ENCODE measurements at regions of chr9 and their contacts with region 1.

Region 1: DNA sequence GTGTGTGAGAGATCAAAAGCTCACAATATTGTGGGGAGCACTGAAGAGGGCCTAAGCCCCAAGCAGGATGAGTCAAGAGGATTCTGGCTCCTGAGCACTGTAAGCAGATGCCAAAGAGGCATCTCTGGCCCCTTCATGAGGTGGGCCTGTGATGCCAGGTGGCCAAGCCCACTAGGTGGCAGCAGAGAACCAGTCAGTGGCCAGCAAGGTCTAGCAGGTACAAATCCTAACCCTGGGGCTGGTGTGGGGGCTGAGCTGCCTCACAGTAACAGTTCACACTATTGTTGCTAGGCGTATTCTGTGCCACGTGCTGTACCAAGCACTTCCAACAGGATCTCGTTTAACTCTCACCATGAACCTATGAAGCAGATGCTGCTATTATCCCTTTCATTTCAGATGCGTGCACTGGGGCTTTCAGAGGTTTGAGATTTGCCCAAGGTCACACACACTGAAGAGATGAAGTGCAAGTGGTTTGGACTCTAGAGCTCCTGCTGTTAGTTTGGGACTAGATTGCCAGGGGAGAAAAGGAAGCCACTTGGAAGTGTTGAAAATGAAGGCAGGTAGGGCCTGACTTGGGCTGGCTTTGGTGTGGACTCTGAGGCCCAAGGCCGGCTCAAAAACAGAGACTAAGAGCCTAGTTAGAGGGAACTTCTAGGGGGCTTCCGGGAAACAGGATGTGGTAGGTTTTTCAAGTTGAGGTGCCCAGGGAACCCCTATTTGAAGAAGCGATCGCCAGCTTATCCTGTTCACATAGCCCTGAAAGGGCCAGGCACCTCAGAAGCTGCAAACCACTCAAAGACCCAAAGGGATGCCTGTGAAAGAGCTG is 4.4 kb upstream of the MLANA start:
- DNase-seq: peak; percentile 57 to 87 (median 81)
- ATAC-seq: peak; percentile 96
- H3K4me3 ChIP-seq: no peak overlapping the region
- H3K4me3 Mint-ChIP-seq: no peak overlapping the region
- H3K27ac ChIP-seq: no peak overlapping the region
- H3K27ac Mint-ChIP-seq: no peak overlapping the region
- H3K4me1 ChIP-seq: peaks cover 10% of the 10 kb centered on the region
- H3K4me1 Mint-ChIP-seq: peaks cover 8% of the 10 kb centered on the region
- H3K27me3 ChIP-seq: no peaks in the 10 kb centered on the region
- H3K27me3 Mint-ChIP-seq: no peaks in the 10 kb centered on the region
- CTCF ChIP-seq: peak; percentile 86

Region 2: GRCh38 chr9:4987961-4988421 is 898.3 kb before region 1 on chr9:
- CTCF ChIA-PET with region 1: no interaction called
- POLR2A ChIA-PET with region 1: no interaction called
- intact Hi-C with region 1: no loop called
- DNase-seq: peak in 8 of 9 experiments; percentile 21 to 79 (median 56)
- ATAC-seq: no peak
- H3K4me3 ChIP-seq: no peak overlapping the region
- H3K4me3 Mint-ChIP-seq: no peak overlapping the region
- H3K27ac ChIP-seq: peak overlapping the region in 1 of 2 experiments; percentile 26
- H3K27ac Mint-ChIP-seq: no peak overlapping the region
- H3K4me1 ChIP-seq: peaks cover 26% of the 10 kb centered on the region
- H3K4me1 Mint-ChIP-seq: peaks cover 34% of the 10 kb centered on the region
- H3K27me3 ChIP-seq: no peaks in the 10 kb centered on the region
- H3K27me3 Mint-ChIP-seq: no peaks in the 10 kb centered on the region
- CTCF ChIP-seq: peak; percentile 74

Region 3: GRCh38 chr9:5764130-5764868 is 122.0 kb before region 1 on chr9:
- CTCF ChIA-PET with region 1: no interaction called
- POLR2A ChIA-PET with region 1: no interaction called
- intact Hi-C with region 1: no loop called
- DNase-seq: no peak
- ATAC-seq: no peak
- H3K4me3 ChIP-seq: no peak overlapping the region
- H3K4me3 Mint-ChIP-seq: no peak overlapping the region
- H3K27ac ChIP-seq: no peak overlapping the region
- H3K27ac Mint-ChIP-seq: no peak overlapping the region
- H3K4me1 ChIP-seq: no peaks in the 10 kb centered on the region
- H3K4me1 Mint-ChIP-seq: peaks cover 13% of the 10 kb centered on the region
- H3K27me3 ChIP-seq: no peaks in the 10 kb centered on the region
- H3K27me3 Mint-ChIP-seq: no peaks in the 10 kb centered on the region
- CTCF ChIP-seq: no peak

Region 4: GRCh38 chr9:5832543-5833529 is 53.5 kb before region 1 on chr9 and contains the start of gene ERMP1:
- CTCF ChIA-PET with region 1: interaction called, 23 read pairs
- POLR2A ChIA-PET with region 1: no interaction called
- intact Hi-C with region 1: loop called in 1 of 2 experiments (anchors 1 kb)
- DNase-seq: peak; percentile 85 to 95 (median 92)
- ATAC-seq: peak; percentile 87
- H3K4me3 ChIP-seq: peak within 1 kb of the TSS; percentile 57 to 91
- H3K4me3 Mint-ChIP-seq: peak within 1 kb of the TSS; percentile 96
- H3K27ac ChIP-seq: peak within 1 kb of the TSS in 1 of 2 experiments; percentile 41
- H3K27ac Mint-ChIP-seq: peak within 1 kb of the TSS; percentile 88
- H3K4me1 ChIP-seq: peaks cover 34% of the 10 kb centered on the region
- H3K4me1 Mint-ChIP-seq: peaks cover 66% of the 10 kb centered on the region
- H3K27me3 ChIP-seq: no peaks in the 10 kb centered on the region
- H3K27me3 Mint-ChIP-seq: no peaks in the 10 kb centered on the region
- CTCF ChIP-seq: peak; percentile 83
- total RNA-seq, gene ERMP1: 5.2 to 7.9 TPM

Region 5: GRCh38 chr9:5851445-5851844 is 34.9 kb before region 1 on chr9:
- CTCF ChIA-PET with region 1: interaction called, 12 read pairs
- POLR2A ChIA-PET with region 1: no interaction called
- intact Hi-C with region 1: no loop called
- DNase-seq: peak in 7 of 9 experiments; percentile 17 to 67 (median 39)
- ATAC-seq: peak; percentile 86
- H3K4me3 ChIP-seq: no peak overlapping the region
- H3K4me3 Mint-ChIP-seq: no peak overlapping the region
- H3K27ac ChIP-seq: peak overlapping the region in 1 of 2 experiments; percentile 34
- H3K27ac Mint-ChIP-seq: peak overlapping the region; percentile 19
- H3K4me1 ChIP-seq: peaks cover 13% of the 10 kb centered on the region
- H3K4me1 Mint-ChIP-seq: peaks cover 32% of the 10 kb centered on the region
- H3K27me3 ChIP-seq: no peaks in the 10 kb centered on the region
- H3K27me3 Mint-ChIP-seq: no peaks in the 10 kb centered on the region
- CTCF ChIP-seq: no peak

Region 6: DNA sequence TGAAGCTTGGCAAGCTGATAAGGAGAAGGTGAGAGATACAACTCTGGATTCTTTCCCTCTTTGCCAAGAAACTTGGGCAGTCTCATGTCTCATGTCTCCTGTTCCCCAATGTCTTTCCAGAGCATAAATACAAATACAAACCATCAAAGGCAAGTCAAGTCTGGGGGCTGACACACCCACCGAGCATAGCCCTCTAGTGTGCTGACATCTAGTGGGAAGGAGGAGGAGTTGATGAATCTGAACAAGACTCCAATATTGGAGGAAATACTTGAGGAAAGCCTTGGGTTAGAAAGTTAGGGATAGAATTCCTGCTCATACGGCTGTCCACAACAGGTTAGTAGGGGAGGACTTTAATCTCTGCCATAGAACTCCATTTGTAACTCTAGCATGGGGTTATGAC is 13.0 kb after region 1 on chr9:
- CTCF ChIA-PET with region 1: interaction called, 21 read pairs
- POLR2A ChIA-PET with region 1: no interaction called
- intact Hi-C with region 1: no loop called
- DNase-seq: peak in 2 of 9 experiments; percentile 22 to 32
- ATAC-seq: no peak
- H3K4me3 ChIP-seq: no peak overlapping the region
- H3K4me3 Mint-ChIP-seq: no peak overlapping the region
- H3K27ac ChIP-seq: no peak overlapping the region
- H3K27ac Mint-ChIP-seq: no peak overlapping the region
- H3K4me1 ChIP-seq: no peaks in the 10 kb centered on the region
- H3K4me1 Mint-ChIP-seq: no peaks in the 10 kb centered on the region
- H3K27me3 ChIP-seq: no peaks in the 10 kb centered on the region
- H3K27me3 Mint-ChIP-seq: no peaks in the 10 kb centered on the region
- CTCF ChIP-seq: no peak

Region 7: DNA sequence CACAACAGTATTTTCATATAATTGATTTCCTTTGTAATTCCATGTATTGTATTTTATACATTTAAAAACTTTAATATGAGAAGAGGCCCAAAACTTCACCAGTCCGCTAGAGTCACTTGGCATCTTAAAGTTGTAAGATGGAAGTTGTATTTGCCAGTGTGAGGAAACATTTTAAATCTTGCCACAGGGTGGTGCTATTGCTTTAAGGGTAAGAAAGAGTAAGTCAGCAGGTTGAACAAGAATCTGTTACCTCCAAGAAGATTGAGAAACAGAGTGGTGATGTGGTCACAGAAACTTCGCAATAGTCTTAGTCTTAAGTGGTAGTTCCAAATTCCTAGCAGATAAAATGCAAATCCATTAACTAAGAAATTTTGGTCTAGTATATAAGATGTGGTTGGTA is 168.9 kb after region 1 on chr9:
- CTCF ChIA-PET with region 1: interaction called, 63 read pairs
- POLR2A ChIA-PET with region 1: no interaction called
- intact Hi-C with region 1: loop called (anchors 1 kb)
- DNase-seq: peak in 4 of 9 experiments; percentile 32 to 80 (median 59)
- ATAC-seq: peak; percentile 69
- H3K4me3 ChIP-seq: no peak overlapping the region
- H3K4me3 Mint-ChIP-seq: no peak overlapping the region
- H3K27ac ChIP-seq: no peak overlapping the region
- H3K27ac Mint-ChIP-seq: no peak overlapping the region
- H3K4me1 ChIP-seq: no peaks in the 10 kb centered on the region
- H3K4me1 Mint-ChIP-seq: peaks cover 3% of the 10 kb centered on the region
- H3K27me3 ChIP-seq: no peaks in the 10 kb centered on the region
- H3K27me3 Mint-ChIP-seq: peaks cover 5% of the 10 kb centered on the region
- CTCF ChIP-seq: peak; percentile 40

Region 8: GRCh38 chr9:6305954-6306563 is 419.7 kb after region 1 on chr9:
- CTCF ChIA-PET with region 1: interaction called, 10 read pairs
- POLR2A ChIA-PET with region 1: no interaction called
- intact Hi-C with region 1: loop called in 1 of 2 experiments (anchors 2 kb)
- DNase-seq: peak in 2 of 9 experiments; percentile 29 to 38
- ATAC-seq: no peak
- H3K4me3 ChIP-seq: no peak overlapping the region
- H3K4me3 Mint-ChIP-seq: no peak overlapping the region
- H3K27ac ChIP-seq: no peak overlapping the region
- H3K27ac Mint-ChIP-seq: no peak overlapping the region
- H3K4me1 ChIP-seq: no peaks in the 10 kb centered on the region
- H3K4me1 Mint-ChIP-seq: no peaks in the 10 kb centered on the region
- H3K27me3 ChIP-seq: no peaks in the 10 kb centered on the region
- H3K27me3 Mint-ChIP-seq: peaks cover 14% of the 10 kb centered on the region
- CTCF ChIP-seq: no peak

Measured in CD8-positive, alpha-beta T cell (primary cell).